ENCODE measurements at regions of chr12 and their contacts with region 1.

Region 1: GRCh38 chr12:108803428-108804105 is 53.8 kb downstream of the SSH1 start:
- DNase-seq: peak; percentile 70 to 84
- H3K4me3 ChIP-seq: no peak overlapping the region
- H3K4me3 Mint-ChIP-seq: no peak overlapping the region
- H3K27ac Mint-ChIP-seq: peak overlapping the region; percentile 35
- H3K4me1 ChIP-seq: peaks cover 11% of the 10 kb centered on the region; the same call in 1 of the 2 replicates
- H3K4me1 Mint-ChIP-seq: no peaks in the 10 kb centered on the region
- H3K27me3 ChIP-seq: no peaks in the 10 kb centered on the region
- H3K27me3 Mint-ChIP-seq: no peaks in the 10 kb centered on the region
- CTCF ChIP-seq: peak; percentile 89 to 90

Region 2: DNA sequence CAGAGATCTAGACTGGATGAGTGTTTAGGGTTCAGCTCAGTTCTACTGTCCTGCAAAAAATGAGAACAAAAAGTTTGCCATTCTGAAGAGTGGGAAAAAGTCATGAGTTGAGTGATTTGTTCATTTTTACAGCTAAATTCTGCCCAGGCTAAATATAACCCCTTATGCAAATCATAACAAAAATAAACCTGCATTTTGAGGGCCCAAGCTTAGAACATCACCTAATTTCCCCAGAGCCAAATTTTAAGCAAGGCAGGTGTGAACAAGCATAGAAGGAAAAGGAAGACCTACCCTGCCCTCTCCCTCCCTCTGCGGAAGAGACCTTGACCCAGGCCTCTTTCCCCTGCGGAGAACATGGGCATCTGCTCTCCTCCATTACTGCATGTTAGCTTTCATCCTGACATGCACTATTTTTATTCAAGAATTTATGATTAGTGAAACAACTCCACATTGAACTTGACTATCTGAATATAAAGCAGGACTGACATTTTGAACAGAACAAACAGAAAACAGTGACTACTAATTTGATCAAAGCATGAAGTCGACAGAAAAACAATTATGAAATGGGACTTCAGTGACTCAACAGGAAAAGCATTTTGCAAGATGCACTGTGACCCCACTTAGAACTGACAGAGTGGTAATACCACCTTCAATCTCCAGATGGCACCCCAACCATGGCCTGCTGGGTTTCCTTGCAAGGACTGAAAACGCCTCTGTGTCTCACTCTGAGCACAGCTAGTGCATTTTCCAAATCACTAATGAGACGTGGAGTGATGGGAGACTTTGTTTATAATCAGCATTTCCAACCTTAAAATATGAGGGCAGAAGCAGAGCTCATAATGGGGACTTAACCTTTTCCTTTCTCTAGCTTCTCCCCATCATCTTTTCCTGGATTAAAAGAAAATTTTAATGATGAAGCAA is 139.0 kb before region 1 on chr12:
- CTCF ChIA-PET with region 1: interaction called, 23 read pairs
- POLR2A ChIA-PET with region 1: no interaction called
- intact Hi-C with region 1: loop called (anchors 1 kb)
- DNase-seq: peak; percentile 84 to 90
- H3K4me3 ChIP-seq: no peak overlapping the region
- H3K4me3 Mint-ChIP-seq: no peak overlapping the region
- H3K27ac Mint-ChIP-seq: no peak overlapping the region
- H3K4me1 ChIP-seq: peaks cover 6% of the 10 kb centered on the region; the same call in 1 of the 2 replicates
- H3K4me1 Mint-ChIP-seq: peaks cover 11% of the 10 kb centered on the region
- H3K27me3 ChIP-seq: no peaks in the 10 kb centered on the region
- H3K27me3 Mint-ChIP-seq: no peaks in the 10 kb centered on the region
- CTCF ChIP-seq: peak; percentile 86 to 88

Region 3: GRCh38 chr12:108683906-108684556 is 119.5 kb before region 1 on chr12:
- CTCF ChIA-PET with region 1: no interaction called
- POLR2A ChIA-PET with region 1: no interaction called
- intact Hi-C with region 1: loop called (anchors 5 kb)
- DNase-seq: peak in 1 of 2 experiments; percentile 34
- H3K4me3 ChIP-seq: no peak overlapping the region
- H3K4me3 Mint-ChIP-seq: peak overlapping the region; percentile 62
- H3K27ac Mint-ChIP-seq: peak overlapping the region; percentile 72
- H3K4me1 ChIP-seq: peaks cover 34% of the 10 kb centered on the region
- H3K4me1 Mint-ChIP-seq: peaks cover 38% of the 10 kb centered on the region
- H3K27me3 ChIP-seq: no peaks in the 10 kb centered on the region
- H3K27me3 Mint-ChIP-seq: no peaks in the 10 kb centered on the region
- CTCF ChIP-seq: no peak

Region 4: GRCh38 chr12:108768591-108769500 is 34.7 kb before region 1 on chr12:
- CTCF ChIA-PET with region 1: interaction called, 22 read pairs
- POLR2A ChIA-PET with region 1: no interaction called
- intact Hi-C with region 1: loop called (anchors 1 kb)
- DNase-seq: peak in 1 of 2 experiments; percentile 37
- H3K4me3 ChIP-seq: no peak overlapping the region; the same call in 1 of the 2 replicates
- H3K4me3 Mint-ChIP-seq: peak overlapping the region; percentile 23
- H3K27ac Mint-ChIP-seq: no peak overlapping the region
- H3K4me1 ChIP-seq: peaks cover 18% of the 10 kb centered on the region
- H3K4me1 Mint-ChIP-seq: peaks cover 7% of the 10 kb centered on the region
- H3K27me3 ChIP-seq: no peaks in the 10 kb centered on the region
- H3K27me3 Mint-ChIP-seq: no peaks in the 10 kb centered on the region
- CTCF ChIP-seq: no peak

Region 5: GRCh38 chr12:108821407-108822397 is 18.1 kb after region 1 on chr12:
- CTCF ChIA-PET with region 1: no interaction called
- POLR2A ChIA-PET with region 1: no interaction called
- intact Hi-C with region 1: no loop called
- DNase-seq: no peak
- H3K4me3 ChIP-seq: no peak overlapping the region
- H3K4me3 Mint-ChIP-seq: no peak overlapping the region
- H3K27ac Mint-ChIP-seq: no peak overlapping the region
- H3K4me1 ChIP-seq: peaks cover 20% of the 10 kb centered on the region
- H3K4me1 Mint-ChIP-seq: peaks cover 17% of the 10 kb centered on the region
- H3K27me3 ChIP-seq: no peaks in the 10 kb centered on the region
- H3K27me3 Mint-ChIP-seq: no peaks in the 10 kb centered on the region
- CTCF ChIP-seq: no peak